Aorta (tissue), 5 donors: ENCODE measurements at regions of chr18 and their contacts with region 1.

Region 1: GRCh38 chr18:53441761-53442414 is 782.6 kb downstream of the MBD2 start:
- DNase-seq: no peak
- ATAC-seq: peak; percentile 15
- H3K4me3 ChIP-seq: no peak overlapping the region
- H3K27ac ChIP-seq: no peak overlapping the region
- H3K4me1 ChIP-seq: no peaks in the 10 kb centered on the region
- H3K27me3 ChIP-seq: no peaks in the 10 kb centered on the region

Region 2: GRCh38 chr18:52288403-52289004 is 1153.4 kb before region 1 on chr18:
- intact Hi-C with region 1: no loop called
- DNase-seq: no peak
- ATAC-seq: no peak
- H3K4me3 ChIP-seq: no peak overlapping the region
- H3K27ac ChIP-seq: no peak overlapping the region
- H3K4me1 ChIP-seq: no peaks in the 10 kb centered on the region
- H3K27me3 ChIP-seq: no peaks in the 10 kb centered on the region

Region 3: DNA sequence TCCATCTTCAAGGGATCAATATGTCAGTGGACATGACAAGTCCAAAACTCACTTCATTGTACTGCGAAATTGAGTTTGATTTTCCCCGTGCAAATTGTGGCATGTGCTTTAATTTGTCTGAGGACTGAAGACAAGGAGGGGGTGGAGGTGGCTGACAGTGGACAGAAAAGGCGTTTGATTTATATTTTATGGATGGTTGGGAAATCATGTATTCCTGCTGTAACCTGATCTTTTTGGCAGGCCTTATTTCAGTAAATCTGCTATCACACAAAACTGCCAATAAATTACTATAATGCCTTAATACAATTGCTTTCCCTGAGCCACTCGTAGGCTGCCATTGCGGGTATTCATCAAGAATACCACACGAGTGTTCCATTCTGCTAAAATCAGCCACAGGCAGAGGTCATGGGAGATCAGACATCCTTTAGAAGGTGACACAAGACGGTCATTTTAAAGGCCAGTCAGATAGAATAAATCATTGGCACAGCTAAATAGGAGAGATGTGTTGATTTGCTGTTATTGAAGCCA is 62.1 kb after region 1 on chr18:
- intact Hi-C with region 1: loop called in 1 of 2 experiments (anchors 10 kb)
- DNase-seq: no peak
- ATAC-seq: no peak
- H3K4me3 ChIP-seq: no peak overlapping the region
- H3K27ac ChIP-seq: no peak overlapping the region
- H3K4me1 ChIP-seq: no peaks in the 10 kb centered on the region
- H3K27me3 ChIP-seq: no peaks in the 10 kb centered on the region